OCI-LY7 (cell line): ENCODE measurements at regions of chr3 and their contacts with region 1.

Region 1: DNA sequence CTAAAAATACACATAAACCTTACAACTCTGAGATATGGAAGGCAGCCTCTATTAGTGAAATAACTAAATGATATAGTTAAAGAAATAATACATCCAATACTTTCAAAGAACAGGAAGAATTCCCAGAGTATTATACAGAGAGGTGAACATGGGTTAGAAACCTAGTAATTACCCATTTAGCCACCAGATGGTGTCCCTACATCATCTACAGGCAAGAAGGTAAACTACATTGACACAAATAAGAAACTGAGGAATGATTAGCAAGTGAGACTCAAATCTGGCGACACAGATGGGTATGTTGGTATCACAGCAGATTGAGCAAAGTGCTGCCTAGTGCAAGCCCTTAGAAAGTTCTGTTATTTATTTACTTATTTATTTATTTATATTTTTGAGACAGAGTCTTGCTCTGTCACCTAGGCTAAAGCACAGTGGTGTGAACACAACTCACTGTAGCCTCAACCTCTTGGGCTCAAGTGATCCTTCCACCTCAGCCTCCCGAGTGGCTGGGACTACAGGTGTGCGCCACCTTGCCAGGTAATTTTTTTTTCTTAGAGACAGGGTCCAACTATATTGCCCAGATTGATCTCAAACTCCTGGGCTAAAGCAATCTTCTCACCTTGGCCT is 28.2 kb downstream of the NEK4 start:
- DNase-seq: peak; percentile 48
- H3K4me3 ChIP-seq: no peak overlapping the region
- H3K27ac ChIP-seq: no peak overlapping the region
- H3K4me1 ChIP-seq: no peaks in the 10 kb centered on the region
- CTCF ChIP-seq: peak; percentile 85

Region 2: GRCh38 chr3:52820736-52821135 is 78.2 kb after region 1 on chr3:
- CTCF ChIA-PET with region 1: interaction called, 3 read pairs
- POLR2A ChIA-PET with region 1: no interaction called
- intact Hi-C with region 1: loop called (anchors 2 kb)
- DNase-seq: peak; percentile 52
- H3K4me3 ChIP-seq: no peak overlapping the region
- H3K27ac ChIP-seq: no peak overlapping the region
- H3K4me1 ChIP-seq: no peaks in the 10 kb centered on the region
- CTCF ChIP-seq: peak; percentile 77